Psoas muscle (tissue), 8 donors: ENCODE measurements at regions of chr11 and their contacts with region 1.

Region 1: DNA sequence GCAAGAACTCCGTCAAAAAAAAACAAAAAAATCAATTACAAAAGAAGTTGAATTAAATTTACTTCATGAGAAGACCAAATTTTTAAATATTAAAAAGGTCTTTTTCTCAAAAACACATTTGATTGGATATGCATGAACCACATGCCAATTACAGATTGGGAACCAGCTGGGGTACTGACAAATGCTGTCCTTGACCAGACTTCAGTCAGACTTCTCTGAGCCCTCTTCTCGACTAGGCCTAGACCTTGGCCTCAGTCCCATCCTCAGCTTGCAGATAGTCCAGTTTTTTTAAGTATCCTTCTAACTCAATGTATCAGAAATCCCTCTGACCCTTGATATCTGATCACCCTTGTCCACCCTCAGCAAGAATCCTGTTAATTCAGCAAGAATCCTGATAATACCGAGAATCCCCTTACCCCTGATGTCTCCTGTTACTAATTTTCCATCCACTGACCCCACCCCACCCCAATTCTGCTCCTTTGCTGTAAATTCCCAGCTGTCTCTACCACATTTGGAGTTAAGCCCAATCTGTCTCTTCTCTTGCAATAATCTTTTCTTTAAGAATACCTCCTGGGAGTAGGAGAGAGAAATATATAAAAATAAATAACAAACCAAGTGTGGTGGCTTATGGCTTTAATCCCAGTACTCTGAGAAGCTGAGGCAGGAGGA is 30.9 kb downstream of the OR4D9 start:
- DNase-seq: no peak
- ATAC-seq: no peak
- H3K4me3 ChIP-seq: no peak overlapping the region
- H3K27ac ChIP-seq: no peak overlapping the region
- H3K4me1 ChIP-seq: no peaks in the 10 kb centered on the region
- H3K27me3 ChIP-seq: no peaks in the 10 kb centered on the region
- CTCF ChIP-seq: no peak

Region 2: DNA sequence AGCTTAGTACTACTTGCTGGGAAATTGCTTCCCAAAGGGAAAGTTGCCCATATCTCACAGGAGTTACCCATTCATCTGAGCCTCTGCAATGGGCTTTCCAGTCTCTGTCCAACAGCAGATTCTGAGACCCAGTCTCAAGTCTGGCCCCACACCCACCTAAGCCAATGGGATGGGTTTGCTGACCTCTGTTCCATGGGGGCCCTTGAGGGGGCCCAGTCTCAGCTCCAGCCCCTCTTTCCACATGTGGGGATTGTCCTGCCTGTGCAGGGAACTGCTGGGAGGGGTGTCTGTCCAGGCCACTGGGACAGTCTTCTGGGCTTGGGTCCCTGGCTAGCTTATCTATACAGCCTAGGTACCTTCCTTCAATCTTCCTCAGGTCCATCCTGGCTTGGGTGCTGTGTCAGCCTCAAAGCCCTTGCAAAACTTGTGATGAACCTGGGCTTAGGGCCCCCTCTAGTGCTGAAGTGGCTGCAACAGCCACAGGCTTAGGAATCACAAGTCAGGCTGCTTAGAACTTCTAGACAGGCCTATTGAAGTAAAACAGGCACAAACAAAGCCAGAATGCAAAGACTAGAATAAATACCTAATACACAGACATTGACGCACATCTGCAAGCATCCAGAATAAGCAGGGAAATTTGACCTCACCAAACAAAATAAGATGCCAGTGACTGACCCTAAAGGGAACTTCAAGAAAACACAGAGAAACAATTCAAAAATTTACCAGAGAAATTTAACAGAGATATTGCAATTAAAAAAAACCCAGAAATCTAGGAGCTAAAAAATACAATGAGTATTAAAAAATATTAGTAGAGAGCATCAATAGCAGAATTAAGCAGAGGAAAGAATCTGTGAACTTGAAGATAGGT is 138.2 kb after region 1 on chr11:
- intact Hi-C with region 1: loop called (anchors 2 kb)
- DNase-seq: peak; percentile 43 to 73
- ATAC-seq: peak; percentile 92 to 99 (median 95)
- H3K4me3 ChIP-seq: no peak overlapping the region
- H3K27ac ChIP-seq: no peak overlapping the region
- H3K4me1 ChIP-seq: no peaks in the 10 kb centered on the region
- H3K27me3 ChIP-seq: peaks cover 0 to 5% (median 0%) of the 10 kb centered on the region in 3 donors
- CTCF ChIP-seq: peak; percentile 72